ENCODE measurements at regions of chr14 and their contacts with region 1.

Region 1: DNA sequence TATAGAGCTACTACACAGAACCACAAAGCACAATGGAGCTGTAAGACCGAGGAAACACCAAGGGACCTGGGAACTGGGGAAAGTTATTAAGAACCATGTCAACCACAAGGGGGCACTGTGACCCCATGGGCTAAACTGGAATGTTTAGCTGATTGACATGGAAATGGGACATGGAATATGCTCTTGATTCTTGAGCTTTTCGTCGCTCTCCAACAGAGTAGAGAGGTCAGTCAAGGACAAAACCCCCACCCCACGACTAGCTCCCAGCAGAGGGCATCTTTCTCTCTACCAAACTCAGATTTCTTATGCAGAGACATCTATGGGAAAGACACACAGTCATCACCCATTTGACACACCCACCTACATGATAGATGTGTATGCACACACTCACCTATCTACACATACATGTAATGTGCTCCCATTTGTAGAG is 10.1 kb downstream of the NDRG2 start:
- DNase-seq: peak; percentile 82 to 93
- H3K4me3 ChIP-seq: no peak overlapping the region
- H3K27ac ChIP-seq: no peak overlapping the region
- H3K4me1 ChIP-seq: peaks cover 2 to 7% (median 5%) of the 10 kb centered on the region in 4 experiments; a peak in 5 of 7 replicates
- H3K27me3 ChIP-seq: no peaks in the 10 kb centered on the region; a peak in 1 of 7 replicates
- CTCF ChIP-seq: peak; percentile 47 to 96 (median 93)
- EP300 ChIP-seq: no peak
- POLR2A ChIP-seq: no peak
- RAD21 ChIP-seq: peak; percentile 98

Region 2: GRCh38 chr14:21024585-21025370 is 10.0 kb after region 1 on chr14 and contains the start of gene NDRG2:
- CTCF ChIA-PET with region 1: interaction called, 152 read pairs
- POLR2A ChIA-PET with region 1: interaction called, 15 read pairs
- DNase-seq: peak in 1 of 2 experiments; percentile 91
- H3K4me3 ChIP-seq: peak within 1 kb of the TSS; percentile 64 to 92 (median 70)
- H3K27ac ChIP-seq: peak within 1 kb of the TSS; percentile 71; the same call in 1 of the 2 replicates
- H3K4me1 ChIP-seq: peaks cover 4 to 22% (median 14%) of the 10 kb centered on the region in 4 experiments; a peak in 6 of 7 replicates
- H3K27me3 ChIP-seq: peaks cover 2 to 25% (median 22%) of the 10 kb centered on the region in 4 experiments; a peak in 6 of 7 replicates
- CTCF ChIP-seq: no peak
- EP300 ChIP-seq: no peak
- POLR2A ChIP-seq: no peak
- RAD21 ChIP-seq: no peak; a peak in 1 of 4 replicates
- total RNA-seq, gene NDRG2: 27.2 and 29.9 TPM in 2 replicates

Region 3: GRCh38 chr14:21049271-21049673 is 34.5 kb after region 1 on chr14:
- CTCF ChIA-PET with region 1: interaction called, 371 read pairs
- POLR2A ChIA-PET with region 1: interaction called, 3 read pairs
- DNase-seq: no peak
- H3K4me3 ChIP-seq: no peak overlapping the region
- H3K27ac ChIP-seq: no peak overlapping the region
- H3K4me1 ChIP-seq: peaks cover 0 to under 1% (median 0%) of the 10 kb centered on the region in 4 experiments; a peak in 1 of 7 replicates
- H3K27me3 ChIP-seq: no peaks in the 10 kb centered on the region
- CTCF ChIP-seq: no peak
- EP300 ChIP-seq: no peak
- POLR2A ChIP-seq: no peak
- RAD21 ChIP-seq: no peak

Region 4: DNA sequence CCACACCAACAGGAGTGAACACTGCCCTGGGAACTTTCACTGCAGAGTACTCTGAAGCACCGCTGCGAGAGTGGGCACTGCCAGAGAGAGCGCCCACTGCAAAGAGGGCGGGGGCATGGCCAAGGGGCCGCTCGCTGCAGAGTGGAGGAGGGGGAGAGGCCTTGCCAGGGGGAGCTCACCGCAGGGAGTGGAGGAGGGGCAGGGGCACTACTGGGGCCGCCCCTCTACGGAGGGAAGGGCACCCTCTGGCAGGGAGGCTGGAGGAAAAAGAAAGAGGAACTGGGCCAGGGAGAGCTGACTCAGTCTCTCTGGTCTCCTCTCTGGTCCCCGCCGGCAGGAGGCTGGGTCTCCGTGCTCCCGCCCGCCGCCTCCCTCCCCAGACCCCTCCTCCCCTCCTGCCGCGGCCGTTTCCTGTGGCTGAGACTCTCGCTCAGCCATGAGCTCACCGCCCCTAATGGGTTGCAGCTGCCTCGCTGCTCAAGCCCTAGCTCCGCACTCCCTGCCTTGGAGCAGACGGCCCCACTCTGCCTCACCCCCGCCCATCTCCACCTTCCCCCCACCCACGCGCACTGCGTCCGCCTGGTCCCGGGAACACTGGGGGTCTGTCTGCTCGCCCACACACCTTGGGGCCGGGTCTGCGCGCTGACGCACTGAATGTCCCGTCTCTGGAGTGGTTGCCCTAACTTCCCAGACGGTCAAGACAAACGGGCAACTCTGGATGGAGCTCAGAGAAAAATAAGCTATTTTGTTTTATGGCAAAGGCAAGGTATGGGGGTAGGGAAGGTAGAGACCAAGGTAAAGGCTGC is 56.7 kb after region 1 on chr14:
- CTCF ChIA-PET with region 1: interaction called, 69 read pairs
- POLR2A ChIA-PET with region 1: interaction called, 14 read pairs
- DNase-seq: no peak
- H3K4me3 ChIP-seq: peak overlapping the region; percentile 52 to 98 (median 82)
- H3K27ac ChIP-seq: peak overlapping the region; percentile 72
- H3K4me1 ChIP-seq: peaks cover 3 to 14% (median 8%) of the 10 kb centered on the region in 4 experiments
- H3K27me3 ChIP-seq: peaks cover 0 to 4% (median 0%) of the 10 kb centered on the region in 4 experiments; a peak in 3 of 7 replicates
- CTCF ChIP-seq: no peak
- EP300 ChIP-seq: no peak
- POLR2A ChIP-seq: peak in 1 of 2 experiments; percentile 73; a peak in 1 of 3 replicates
- RAD21 ChIP-seq: no peak

Region 5: DNA sequence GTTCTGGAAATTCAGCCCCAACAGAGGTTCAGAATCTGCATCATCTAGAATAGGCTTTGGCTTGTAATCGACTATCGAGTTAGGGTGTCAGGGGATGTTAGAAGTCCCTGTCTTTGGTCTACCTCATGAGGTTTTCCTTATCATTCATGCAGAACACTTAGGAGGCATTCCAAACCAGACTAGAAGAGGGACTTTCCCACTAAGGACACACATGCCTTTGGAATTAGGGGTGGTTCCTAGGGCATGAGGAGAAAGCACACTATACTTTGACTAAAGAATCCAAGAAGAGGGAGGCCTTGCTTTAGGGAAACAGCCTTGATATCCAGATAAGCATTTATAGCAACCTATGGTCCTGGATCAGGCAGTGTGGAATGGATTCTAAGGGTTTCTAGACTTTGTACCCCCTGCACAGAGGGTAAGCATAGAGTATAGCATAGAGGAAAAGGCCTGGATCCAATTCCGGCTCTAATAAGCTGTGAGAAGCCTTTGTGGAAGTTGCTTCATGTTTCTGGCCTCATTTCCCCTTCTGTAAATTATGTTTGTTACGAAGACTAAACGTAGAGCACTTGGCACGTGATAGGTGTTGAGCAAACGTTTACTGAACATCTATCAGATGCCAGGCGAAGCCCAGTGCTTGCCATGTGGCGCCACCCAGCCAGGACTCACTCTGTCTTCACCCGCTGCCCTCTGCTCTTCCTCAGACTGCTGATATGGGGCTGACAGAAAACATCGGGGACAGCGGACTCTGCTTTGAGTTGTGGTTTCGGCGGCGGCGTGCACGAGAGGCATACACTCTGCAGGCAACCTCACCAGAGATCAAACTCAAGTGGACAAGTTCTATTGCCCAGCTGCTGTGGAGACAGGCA is 70.4 kb after region 1 on chr14:
- CTCF ChIA-PET with region 1: interaction called, 84 read pairs
- POLR2A ChIA-PET with region 1: interaction called, 10 read pairs
- DNase-seq: no peak
- H3K4me3 ChIP-seq: no peak overlapping the region
- H3K27ac ChIP-seq: no peak overlapping the region
- H3K4me1 ChIP-seq: peaks cover 0 to 5% (median 0%) of the 10 kb centered on the region in 4 experiments; a peak in 2 of 7 replicates
- H3K27me3 ChIP-seq: no peaks in the 10 kb centered on the region
- CTCF ChIP-seq: no peak
- EP300 ChIP-seq: no peak
- POLR2A ChIP-seq: 0 out of 3 replicates have a peak, but pooled peaks of 1 of the 2 experiments have one; percentile 35
- RAD21 ChIP-seq: no peak

Region 6: DNA sequence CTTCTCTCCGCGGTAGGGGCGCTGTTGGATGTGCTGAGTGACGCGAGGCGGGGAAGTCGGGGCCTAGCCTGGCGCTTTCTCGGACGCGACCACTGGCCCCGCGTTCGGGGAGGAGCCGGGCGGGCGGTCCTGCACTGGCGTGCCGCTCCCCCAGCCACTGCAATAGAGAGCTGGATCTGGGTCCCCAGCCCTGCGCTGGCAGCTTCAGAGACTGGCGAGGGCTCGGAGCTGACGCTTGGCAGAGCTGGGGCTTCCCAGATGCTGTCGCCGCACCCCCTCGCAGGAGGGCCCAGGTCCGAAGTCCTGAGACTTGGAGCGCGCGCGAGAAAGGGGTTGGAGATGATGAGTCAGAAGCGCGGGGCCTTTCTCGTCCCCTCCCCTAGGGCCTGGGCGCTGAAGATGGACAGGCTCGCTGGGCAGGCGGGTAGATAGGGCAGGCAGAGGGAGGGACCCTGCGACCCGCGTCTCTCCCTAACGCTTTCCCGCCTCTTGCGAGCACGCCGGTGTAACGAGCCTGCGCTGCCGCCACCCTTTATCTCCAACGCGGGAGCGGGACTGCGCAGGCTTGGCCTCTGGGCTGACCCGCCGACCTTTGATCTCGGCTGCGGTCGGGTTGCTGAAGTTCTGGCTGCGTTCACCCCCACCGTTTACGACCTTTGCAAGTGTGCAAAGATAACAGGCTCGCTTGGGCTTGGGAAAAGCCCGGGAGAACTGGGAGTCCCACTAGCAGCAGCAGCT is 89.1 kb after region 1 on chr14:
- CTCF ChIA-PET with region 1: interaction called, 94 read pairs
- POLR2A ChIA-PET with region 1: no interaction called
- DNase-seq: peak; percentile 80 to 96
- H3K4me3 ChIP-seq: peak overlapping the region; percentile 49 to 83 (median 80)
- H3K27ac ChIP-seq: peak overlapping the region; percentile 99
- H3K4me1 ChIP-seq: peaks cover 2 to 25% (median 9%) of the 10 kb centered on the region in 4 experiments; a peak in 5 of 7 replicates
- H3K27me3 ChIP-seq: no peaks in the 10 kb centered on the region
- CTCF ChIP-seq: peak; percentile 70 to 86 (median 75)
- EP300 ChIP-seq: peak in 1 of 2 experiments; percentile 99; a peak in 2 of 3 replicates
- POLR2A ChIP-seq: peak; percentile 88 to 93
- RAD21 ChIP-seq: peak; percentile 9 to 33; a peak in 3 of 4 replicates